ENCODE measurements at regions of chr6 and their contacts with region 1.

Region 1: GRCh38 chr6:134247231-134247833 is 70.6 kb downstream of the SGK1 start:
- DNase-seq: peak; percentile 66
- H3K4me3 Mint-ChIP-seq: no peak overlapping the region
- H3K27ac Mint-ChIP-seq: peak overlapping the region; percentile 87
- H3K4me1 Mint-ChIP-seq: peaks cover 47% of the 10 kb centered on the region
- H3K27me3 Mint-ChIP-seq: no peaks in the 10 kb centered on the region

Region 2: GRCh38 chr6:134196568-134197193 is 50.7 kb before region 1 on chr6:
- intact Hi-C with region 1: loop called (anchors 5 kb)
- DNase-seq: no peak
- H3K4me3 Mint-ChIP-seq: no peak overlapping the region
- H3K27ac Mint-ChIP-seq: no peak overlapping the region
- H3K4me1 Mint-ChIP-seq: peaks cover 25% of the 10 kb centered on the region
- H3K27me3 Mint-ChIP-seq: no peaks in the 10 kb centered on the region

Region 3: GRCh38 chr6:134235937-134236751 is 11.2 kb before region 1 on chr6:
- intact Hi-C with region 1: loop called (anchors 1 kb)
- DNase-seq: no peak
- H3K4me3 Mint-ChIP-seq: no peak overlapping the region
- H3K27ac Mint-ChIP-seq: peak overlapping the region; percentile 58
- H3K4me1 Mint-ChIP-seq: peaks cover 38% of the 10 kb centered on the region
- H3K27me3 Mint-ChIP-seq: no peaks in the 10 kb centered on the region